HCT116 (cell line): ENCODE measurements at regions of chr15 and their contacts with region 1.

Region 1: GRCh38 chr15:44584162-44584749 is 47.3 kb downstream of the EIF3J start:
- DNase-seq: peak; percentile 26
- ATAC-seq: peak; percentile 100
- H3K4me3 ChIP-seq: no peak overlapping the region
- H3K27ac ChIP-seq: no peak overlapping the region
- H3K4me1 ChIP-seq: no peaks in the 10 kb centered on the region
- H3K27me3 ChIP-seq: no peaks in the 10 kb centered on the region
- CTCF ChIP-seq: peak; percentile 47 to 84 (median 81); a peak in 5 of 6 replicates
- POLR2A ChIP-seq: no peak
- RAD21 ChIP-seq: peak; percentile 54

Region 2: GRCh38 chr15:44426975-44427755 is 157.1 kb before region 1 on chr15 and contains the start of gene CTDSPL2:
- CTCF ChIA-PET with region 1: no interaction called
- POLR2A ChIA-PET with region 1: no interaction called
- RAD21 ChIA-PET with region 1: no interaction called
- intact Hi-C with region 1: no loop called
- DNase-seq: peak; percentile 97
- ATAC-seq: peak; percentile 97
- H3K4me3 ChIP-seq: peak within 1 kb of the TSS; percentile 96 to 99
- H3K27ac ChIP-seq: peak within 1 kb of the TSS; percentile 89
- H3K4me1 ChIP-seq: peaks cover 7 to 21% of the 10 kb centered on the region in 2 experiments
- H3K27me3 ChIP-seq: no peaks in the 10 kb centered on the region
- CTCF ChIP-seq: peak in 2 of 3 experiments; percentile 19 to 28; a peak in 2 of 6 replicates
- POLR2A ChIP-seq: peak; percentile 50
- RAD21 ChIP-seq: no peak
- total RNA-seq, gene CTDSPL2: 56.0 TPM

Region 3: DNA sequence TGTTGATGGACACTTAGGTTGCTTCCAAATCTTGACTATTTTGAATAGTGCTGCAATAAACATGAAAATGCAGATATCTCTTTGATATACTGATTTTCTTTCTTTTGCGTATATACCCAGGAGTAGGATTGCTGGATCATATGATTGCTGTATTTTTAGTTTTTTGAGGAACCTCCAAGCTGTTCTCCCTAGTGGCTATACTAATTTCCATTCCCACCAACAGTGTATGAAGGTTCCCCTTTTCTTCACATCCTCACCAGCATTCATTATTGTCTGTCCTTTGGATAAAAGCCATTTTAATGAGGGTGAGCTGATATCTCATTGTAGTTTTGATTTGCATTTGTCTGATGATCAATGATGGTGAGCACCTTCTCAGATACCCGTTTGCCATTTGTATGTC is 114.4 kb after region 1 on chr15:
- CTCF ChIA-PET with region 1: no interaction called
- POLR2A ChIA-PET with region 1: no interaction called
- RAD21 ChIA-PET with region 1: no interaction called
- intact Hi-C with region 1: no loop called
- DNase-seq: no peak
- ATAC-seq: no peak
- H3K4me3 ChIP-seq: no peak overlapping the region
- H3K27ac ChIP-seq: no peak overlapping the region
- H3K4me1 ChIP-seq: no peaks in the 10 kb centered on the region
- H3K27me3 ChIP-seq: no peaks in the 10 kb centered on the region
- CTCF ChIP-seq: no peak
- POLR2A ChIP-seq: no peak
- RAD21 ChIP-seq: no peak

Region 4: GRCh38 chr15:44918136-44918535 is 333.9 kb after region 1 on chr15:
- CTCF ChIA-PET with region 1: no interaction called
- POLR2A ChIA-PET with region 1: no interaction called
- RAD21 ChIA-PET with region 1: no interaction called
- intact Hi-C with region 1: loop called (anchors 5 kb)
- DNase-seq: no peak
- ATAC-seq: no peak
- H3K4me3 ChIP-seq: no peak overlapping the region
- H3K27ac ChIP-seq: no peak overlapping the region
- H3K4me1 ChIP-seq: no peaks in the 10 kb centered on the region
- H3K27me3 ChIP-seq: no peaks in the 10 kb centered on the region
- CTCF ChIP-seq: no peak
- POLR2A ChIP-seq: no peak
- RAD21 ChIP-seq: no peak